ENCODE measurements at regions of chr1 and their contacts with region 1.

Region 1: GRCh38 chr1:19096036-19096833 is 113.8 kb downstream of the UBR4 start:
- H3K4me3 ChIP-seq: no peak overlapping the region
- H3K27ac ChIP-seq: no peak overlapping the region
- H3K4me1 ChIP-seq: no peaks in the 10 kb centered on the region
- CTCF ChIP-seq: peak; percentile 35; the same call in 1 of the 2 replicates

Region 2: DNA sequence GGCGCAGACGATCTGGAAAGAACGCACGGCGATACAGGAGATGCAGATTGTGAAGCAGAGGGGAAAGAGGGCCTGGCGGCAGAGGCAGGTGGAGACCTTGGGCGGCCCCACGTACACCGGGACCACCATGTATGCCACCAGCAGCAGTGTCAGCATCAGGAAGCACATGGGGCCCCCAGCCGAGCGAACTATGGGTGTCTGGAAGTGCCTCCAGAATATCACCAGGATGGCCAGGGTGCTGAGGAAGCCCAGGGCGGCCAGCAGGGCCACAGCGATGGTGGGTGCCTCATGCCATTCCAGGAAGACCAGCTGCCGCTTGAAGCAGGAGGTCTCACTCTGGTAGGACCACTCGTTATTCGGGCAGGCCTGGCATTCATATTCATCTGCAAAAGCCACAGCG is 256.1 kb before region 1 on chr1:
- CTCF ChIA-PET with region 1: no interaction called
- POLR2A ChIA-PET with region 1: no interaction called
- H3K4me3 ChIP-seq: no peak overlapping the region
- H3K27ac ChIP-seq: no peak overlapping the region
- H3K4me1 ChIP-seq: no peaks in the 10 kb centered on the region
- CTCF ChIP-seq: no peak

Region 3: DNA sequence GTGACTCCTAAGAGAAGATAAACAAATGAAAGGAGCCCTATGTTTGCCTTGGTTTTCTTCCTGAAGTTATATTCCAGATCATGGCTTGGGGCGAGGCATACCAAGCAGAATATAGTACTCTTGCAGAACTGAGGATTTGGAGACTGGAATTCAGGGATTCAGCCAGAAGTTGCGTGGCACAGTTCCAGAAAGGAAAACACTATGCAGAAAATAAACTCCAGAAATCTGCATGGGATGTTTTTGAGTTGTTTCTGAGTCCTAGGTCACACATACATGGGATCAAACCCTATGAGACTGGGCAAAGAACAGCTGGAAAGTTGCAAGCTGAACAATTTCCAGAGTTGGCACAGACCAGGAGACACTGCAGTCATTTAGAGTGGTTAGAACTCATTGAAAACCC is 96.9 kb before region 1 on chr1:
- CTCF ChIA-PET with region 1: no interaction called
- POLR2A ChIA-PET with region 1: no interaction called
- H3K4me3 ChIP-seq: no peak overlapping the region
- H3K27ac ChIP-seq: no peak overlapping the region
- H3K4me1 ChIP-seq: no peaks in the 10 kb centered on the region
- CTCF ChIP-seq: no peak

Region 4: DNA sequence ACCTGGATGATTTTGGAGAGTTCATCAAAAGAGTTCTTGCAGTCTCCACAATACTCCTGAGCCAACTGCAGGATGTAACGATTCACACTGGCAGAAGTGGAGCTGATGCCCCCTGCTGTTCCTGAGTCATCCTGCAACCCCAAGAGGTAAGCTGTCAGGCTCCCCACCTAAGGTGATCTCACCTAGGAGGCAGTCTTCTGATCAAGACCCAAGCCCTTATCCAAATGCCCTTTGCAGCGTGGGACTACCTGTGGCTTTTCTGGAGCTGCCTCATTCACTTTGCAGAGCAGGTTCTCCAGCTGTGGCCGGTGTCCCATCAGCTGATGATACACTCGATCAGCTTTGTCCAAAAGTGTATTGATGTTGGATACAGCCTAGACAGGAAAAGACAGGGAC is 17.5 kb after region 1 on chr1:
- CTCF ChIA-PET with region 1: interaction called, 11 read pairs
- POLR2A ChIA-PET with region 1: no interaction called
- H3K4me3 ChIP-seq: no peak overlapping the region
- H3K27ac ChIP-seq: no peak overlapping the region
- H3K4me1 ChIP-seq: no peaks in the 10 kb centered on the region
- CTCF ChIP-seq: peak; percentile 44; the same call in 1 of the 2 replicates